PC-9 (cell line): ENCODE measurements at regions of chr4 and their contacts with region 1.

Region 1: GRCh38 chr4:7192252-7193029 is at the start of gene SORCS2:
- DNase-seq: peak in 1 of 2 experiments; percentile 82
- H3K4me3 ChIP-seq: peak within 1 kb of the TSS; percentile 71
- H3K27ac ChIP-seq: no peak within 1 kb of the TSS
- H3K4me1 ChIP-seq: peaks cover 37% of the 10 kb centered on the region
- H3K27me3 ChIP-seq: peaks cover 3% of the 10 kb centered on the region
- CTCF ChIP-seq: no peak; the same call in 1 of the 2 replicates
- total RNA-seq, gene SORCS2: 20.7 and 25.8 TPM in 2 replicates

Region 2: GRCh38 chr4:7206911-7207567 is 14.6 kb after region 1 on chr4:
- CTCF ChIA-PET with region 1: interaction called, 4 read pairs
- POLR2A ChIA-PET with region 1: interaction called, 9 read pairs
- intact Hi-C with region 1: loop called (anchors 1 kb)
- DNase-seq: peak; percentile 65 to 86
- H3K4me3 ChIP-seq: no peak overlapping the region; the same call in 1 of the 2 replicates
- H3K27ac ChIP-seq: peak overlapping the region; percentile 95
- H3K4me1 ChIP-seq: peaks cover 64% of the 10 kb centered on the region
- H3K27me3 ChIP-seq: no peaks in the 10 kb centered on the region
- CTCF ChIP-seq: no peak

Region 3: DNA sequence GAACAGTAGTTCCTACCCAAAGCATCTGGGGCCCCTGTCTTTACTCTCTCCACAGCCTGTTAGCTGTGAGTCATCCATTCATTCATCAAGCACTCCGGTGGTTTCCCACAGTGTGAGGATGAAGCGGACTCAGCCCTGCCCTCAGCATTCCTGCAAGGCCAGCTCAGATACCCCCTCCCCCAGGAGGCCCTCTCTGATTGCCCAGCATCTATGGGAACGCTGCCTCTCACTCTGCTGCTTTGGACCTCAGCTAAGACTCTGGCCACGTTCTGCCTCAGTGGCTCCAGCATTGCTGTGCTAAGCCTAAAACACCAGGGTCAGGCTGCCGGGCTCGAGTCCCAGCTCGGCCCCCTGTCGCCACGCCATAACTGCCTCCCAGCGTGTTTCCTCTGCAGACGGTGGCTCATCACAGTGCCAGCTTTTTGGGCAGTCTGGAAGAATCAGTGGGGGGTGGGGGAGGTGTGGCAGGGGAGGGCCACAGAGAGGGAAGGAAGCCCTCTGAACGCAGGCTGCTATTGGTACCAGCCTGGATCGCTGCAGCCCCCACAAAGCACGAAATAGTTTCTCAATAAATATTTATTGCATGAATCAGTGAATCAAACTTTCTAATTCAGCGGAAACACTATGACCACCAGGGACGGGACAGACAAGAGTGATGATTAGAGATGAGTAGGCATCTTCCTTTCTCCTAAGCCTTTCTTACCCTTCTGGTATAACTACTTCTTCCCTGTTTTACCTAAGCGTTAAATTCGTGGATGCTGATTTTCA is 74.3 kb after region 1 on chr4:
- CTCF ChIA-PET with region 1: no interaction called
- POLR2A ChIA-PET with region 1: interaction called, 16 read pairs
- intact Hi-C with region 1: loop called (anchors 1 kb)
- DNase-seq: peak; percentile 42 to 77
- H3K4me3 ChIP-seq: no peak overlapping the region
- H3K27ac ChIP-seq: peak overlapping the region; percentile 73
- H3K4me1 ChIP-seq: peaks cover 42% of the 10 kb centered on the region
- H3K27me3 ChIP-seq: no peaks in the 10 kb centered on the region
- CTCF ChIP-seq: no peak

Region 4: DNA sequence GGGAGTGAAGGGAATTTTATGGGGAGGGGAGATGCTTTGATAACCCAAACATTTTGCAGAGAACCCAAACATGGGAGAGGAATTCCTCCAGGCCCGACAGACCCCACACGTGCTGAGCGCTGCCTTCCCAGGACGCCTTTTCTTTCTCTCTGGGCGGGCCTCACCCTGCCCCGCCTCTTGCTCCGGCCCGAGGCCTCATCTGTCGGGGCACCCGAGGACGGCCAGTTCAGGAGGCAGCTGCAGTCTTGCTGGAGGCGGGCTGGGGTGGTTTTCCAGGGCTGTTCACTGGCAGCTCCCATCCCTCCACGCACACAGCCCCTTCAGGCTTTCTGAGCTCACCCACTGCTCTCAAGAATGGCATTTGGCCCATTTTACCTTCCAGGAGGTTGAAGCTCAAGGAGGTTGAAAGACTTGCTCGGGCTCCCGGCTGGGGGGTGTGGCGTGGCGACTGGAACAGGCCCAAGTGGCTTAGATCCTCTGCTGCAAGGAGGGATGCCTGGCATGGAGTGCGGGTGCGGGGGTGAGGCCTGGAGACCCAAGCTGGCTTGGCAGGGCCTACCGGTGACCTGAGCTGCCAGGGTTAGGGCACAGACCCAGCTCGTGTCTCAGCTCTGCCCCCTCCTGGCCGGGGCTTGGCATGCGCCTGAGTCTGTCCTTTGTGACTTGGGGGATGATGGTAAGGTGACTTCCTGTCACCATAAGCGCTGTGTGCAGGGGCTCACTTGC is 143.1 kb after region 1 on chr4:
- CTCF ChIA-PET with region 1: interaction called, 4 read pairs
- POLR2A ChIA-PET with region 1: interaction called, 3 read pairs
- intact Hi-C with region 1: loop called (anchors 1 kb)
- DNase-seq: peak; percentile 51 to 79
- H3K4me3 ChIP-seq: no peak overlapping the region
- H3K27ac ChIP-seq: no peak overlapping the region
- H3K4me1 ChIP-seq: no peaks in the 10 kb centered on the region
- H3K27me3 ChIP-seq: no peaks in the 10 kb centered on the region
- CTCF ChIP-seq: peak; percentile 77

Region 5: DNA sequence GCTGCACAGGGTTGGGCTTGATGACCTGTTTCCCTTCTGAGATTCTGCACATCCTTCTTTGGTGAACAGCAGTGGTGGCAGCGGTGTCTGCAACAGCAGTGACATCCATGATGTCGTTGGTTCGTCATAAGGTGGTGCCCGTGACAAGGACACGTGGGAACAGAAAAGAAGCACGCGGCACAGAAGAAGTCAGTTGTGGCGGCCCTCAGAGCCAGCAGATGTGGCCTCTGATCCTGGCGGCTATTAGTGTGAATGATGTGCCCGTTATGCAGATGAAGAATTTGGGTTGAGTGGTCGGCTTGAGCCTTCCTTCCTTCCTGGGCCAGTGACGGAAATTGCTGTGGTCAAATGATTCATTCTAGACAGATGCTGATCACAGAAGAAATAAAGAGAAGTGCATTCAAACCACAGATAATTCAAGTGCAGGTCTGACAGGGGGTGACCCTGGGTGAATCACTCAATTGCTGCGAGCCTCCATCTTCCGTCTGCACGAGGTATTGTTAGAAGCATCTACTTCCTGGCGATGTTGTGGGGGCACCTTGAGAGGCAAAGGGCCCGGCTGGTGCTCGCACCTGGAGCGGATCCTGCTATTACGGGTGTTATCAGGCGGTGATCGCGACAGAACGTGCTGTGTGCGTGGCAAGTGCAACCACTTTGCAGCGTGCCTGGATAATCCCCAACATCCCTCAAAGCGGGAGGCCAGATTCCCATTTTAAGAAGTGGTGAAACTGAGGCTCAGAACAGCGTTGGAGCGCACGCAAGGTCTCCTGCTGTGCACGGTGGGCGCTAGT is 457.5 kb after region 1 on chr4:
- CTCF ChIA-PET with region 1: interaction called, 4 read pairs
- POLR2A ChIA-PET with region 1: no interaction called
- intact Hi-C with region 1: loop called (anchors 2 kb)
- DNase-seq: peak; percentile 41 to 59
- H3K4me3 ChIP-seq: no peak overlapping the region
- H3K27ac ChIP-seq: no peak overlapping the region
- H3K4me1 ChIP-seq: peaks cover 13% of the 10 kb centered on the region; the same call in 1 of the 2 replicates
- H3K27me3 ChIP-seq: no peaks in the 10 kb centered on the region
- CTCF ChIP-seq: no peak

Region 6: GRCh38 chr4:7802093-7802726 is 609.8 kb after region 1 on chr4:
- CTCF ChIA-PET with region 1: no interaction called
- POLR2A ChIA-PET with region 1: interaction called, 6 read pairs
- intact Hi-C with region 1: loop called (anchors 5 kb)
- DNase-seq: peak; percentile 51 to 73
- H3K4me3 ChIP-seq: no peak overlapping the region
- H3K27ac ChIP-seq: no peak overlapping the region
- H3K4me1 ChIP-seq: peaks cover 23% of the 10 kb centered on the region
- H3K27me3 ChIP-seq: no peaks in the 10 kb centered on the region
- CTCF ChIP-seq: peak; percentile 86

Region 7: DNA sequence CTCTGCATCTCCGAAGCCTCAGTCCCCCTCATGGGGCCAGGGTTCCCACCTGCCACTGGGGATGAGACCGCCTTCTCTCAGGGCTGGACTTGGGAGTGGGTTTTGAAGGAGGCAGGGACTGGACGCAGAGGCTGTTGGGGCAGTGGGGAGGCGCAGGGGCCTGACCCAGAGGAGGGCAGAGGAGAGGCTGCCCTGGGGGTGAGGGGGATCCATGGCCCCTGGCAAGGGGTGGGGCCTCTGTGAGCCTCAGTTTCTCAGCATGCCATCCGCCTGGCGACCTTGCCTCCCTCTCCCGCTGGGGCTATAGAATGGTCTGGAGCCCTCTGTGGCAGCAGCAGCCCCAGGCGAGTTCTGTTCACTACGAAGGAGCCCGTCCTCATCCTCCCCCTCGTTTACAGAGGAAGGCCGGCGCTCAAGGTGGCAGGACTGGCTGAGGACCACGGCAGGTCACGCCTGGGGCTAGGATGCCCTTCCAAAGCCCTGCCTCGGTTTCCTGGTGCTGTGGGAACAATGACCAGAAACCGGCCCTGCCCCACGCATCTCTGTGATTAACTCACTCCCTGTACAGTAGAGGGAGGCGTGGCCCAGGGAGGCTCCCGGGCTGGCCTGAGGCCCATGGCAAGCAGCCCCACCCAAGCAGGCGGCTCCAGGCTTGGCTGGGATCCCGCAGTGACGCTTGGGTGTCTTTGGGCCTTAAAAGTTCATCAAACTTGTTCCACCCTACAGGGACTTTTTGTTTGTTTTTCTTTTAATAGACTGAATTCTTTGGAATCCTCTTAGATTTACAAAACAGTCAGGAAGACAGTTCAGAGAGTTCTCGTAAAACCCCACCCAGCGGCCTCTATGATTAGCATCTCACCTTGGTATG is 990.7 kb after region 1 on chr4:
- CTCF ChIA-PET with region 1: no interaction called
- POLR2A ChIA-PET with region 1: no interaction called
- intact Hi-C with region 1: loop called (anchors 5 kb)
- DNase-seq: peak; percentile 97 to 98
- H3K4me3 ChIP-seq: no peak overlapping the region
- H3K27ac ChIP-seq: peak overlapping the region; percentile 75
- H3K4me1 ChIP-seq: peaks cover 40% of the 10 kb centered on the region
- H3K27me3 ChIP-seq: no peaks in the 10 kb centered on the region
- CTCF ChIP-seq: no peak